Posterior vena cava (tissue), 2 donors: ENCODE measurements at regions of chr15 and their contacts with region 1.

Region 1: GRCh38 chr15:59662260-59662659 is 4.9 kb upstream of the GTF2A2 start:
- DNase-seq: no peak

Region 2: DNA sequence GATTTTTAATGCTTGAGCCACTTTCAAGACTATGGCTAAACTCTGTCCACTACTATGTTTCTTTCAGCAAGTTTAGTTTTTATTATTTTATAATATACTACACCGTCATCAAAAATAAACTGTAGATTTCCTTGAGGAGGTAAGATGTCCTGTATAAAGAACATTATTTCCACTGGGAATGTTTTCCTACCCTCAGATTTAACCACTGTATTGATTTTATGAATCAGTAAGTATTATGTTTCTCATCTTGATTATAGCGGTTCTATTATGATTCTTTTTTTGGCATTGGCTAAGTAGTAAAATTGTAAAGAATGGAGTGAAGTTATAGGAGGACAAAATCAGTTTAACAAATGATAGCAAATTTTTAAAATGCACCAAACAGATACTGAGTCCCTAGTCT is 957.2 kb before region 1 on chr15:
- intact Hi-C with region 1: loop called in 1 of 2 experiments (anchors 5 kb)
- DNase-seq: no peak